ENCODE measurements at regions of chr2 and their contacts with region 1.

Region 1: DNA sequence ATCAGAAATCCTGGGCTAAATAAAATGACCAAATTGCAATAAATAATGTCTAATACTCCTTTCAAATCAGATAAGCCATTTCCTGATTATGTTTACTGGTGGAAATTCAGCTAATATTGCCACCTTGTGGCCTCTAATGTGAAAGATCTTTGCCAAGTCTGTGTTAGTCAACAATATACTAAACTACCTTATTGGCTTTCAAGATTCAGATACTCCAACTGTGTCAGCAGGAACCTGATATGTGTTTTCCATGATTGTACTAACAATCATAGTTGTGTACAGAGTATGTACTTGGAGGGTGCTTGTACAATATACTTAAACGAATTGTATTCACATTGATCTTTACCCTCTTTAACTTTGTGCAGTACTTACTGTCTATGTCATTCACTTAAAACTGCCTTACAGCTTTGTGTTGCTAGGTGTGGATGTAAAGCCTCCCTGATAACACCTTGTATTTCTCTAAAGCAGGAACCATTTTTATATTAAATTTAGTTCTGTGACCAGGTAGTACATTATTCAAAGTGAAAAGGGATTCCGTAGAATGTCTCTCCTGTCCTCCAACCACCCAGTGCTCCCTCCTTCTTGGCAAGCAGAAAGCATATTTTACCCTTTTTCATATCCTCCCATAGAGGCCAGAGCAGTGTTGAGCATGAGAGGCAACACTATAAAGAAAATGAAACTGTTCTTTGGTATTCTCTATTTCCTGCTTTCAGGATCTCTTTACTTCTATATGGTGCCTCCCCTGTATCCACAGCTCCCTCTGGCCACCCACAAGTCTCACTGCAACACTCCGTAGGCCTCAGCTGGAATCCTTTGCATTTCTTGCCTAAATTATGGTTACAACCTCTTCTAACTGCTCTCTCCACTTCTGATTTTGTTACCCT is 75.2 kb upstream of the C2orf15 start:
- DNase-seq: peak; percentile 64
- ATAC-seq: peak; percentile 99
- H3K4me3 ChIP-seq: peak overlapping the region; percentile 27 to 51 (median 41); a peak in 5 of 6 replicates
- H3K27ac ChIP-seq: no peak overlapping the region
- H3K4me1 ChIP-seq: peaks cover 15% of the 10 kb centered on the region
- H3K27me3 ChIP-seq: no peaks in the 10 kb centered on the region
- CTCF ChIP-seq: peak; percentile 75
- EP300 ChIP-seq: no peak
- POLR2A ChIP-seq: no peak
- RAD21 ChIP-seq: peak; percentile 48; the same call in 1 of the 2 replicates

Region 2: GRCh38 chr2:98412751-98413458 is 653.4 kb before region 1 on chr2:
- CTCF ChIA-PET with region 1: interaction called, 8 read pairs
- POLR2A ChIA-PET with region 1: no interaction called
- in situ Hi-C with region 1: no loop called
- intact Hi-C with region 1: loop called (anchors 1 kb)
- DNase-seq: peak; percentile 77
- ATAC-seq: peak; percentile 91
- H3K4me3 ChIP-seq: no peak overlapping the region
- H3K27ac ChIP-seq: no peak overlapping the region
- H3K4me1 ChIP-seq: peaks cover 10% of the 10 kb centered on the region; the same call in 1 of the 2 replicates
- H3K27me3 ChIP-seq: no peaks in the 10 kb centered on the region; a peak in 1 of 5 replicates
- CTCF ChIP-seq: peak; percentile 83
- EP300 ChIP-seq: no peak
- POLR2A ChIP-seq: no peak
- RAD21 ChIP-seq: peak; percentile 65

Region 3: DNA sequence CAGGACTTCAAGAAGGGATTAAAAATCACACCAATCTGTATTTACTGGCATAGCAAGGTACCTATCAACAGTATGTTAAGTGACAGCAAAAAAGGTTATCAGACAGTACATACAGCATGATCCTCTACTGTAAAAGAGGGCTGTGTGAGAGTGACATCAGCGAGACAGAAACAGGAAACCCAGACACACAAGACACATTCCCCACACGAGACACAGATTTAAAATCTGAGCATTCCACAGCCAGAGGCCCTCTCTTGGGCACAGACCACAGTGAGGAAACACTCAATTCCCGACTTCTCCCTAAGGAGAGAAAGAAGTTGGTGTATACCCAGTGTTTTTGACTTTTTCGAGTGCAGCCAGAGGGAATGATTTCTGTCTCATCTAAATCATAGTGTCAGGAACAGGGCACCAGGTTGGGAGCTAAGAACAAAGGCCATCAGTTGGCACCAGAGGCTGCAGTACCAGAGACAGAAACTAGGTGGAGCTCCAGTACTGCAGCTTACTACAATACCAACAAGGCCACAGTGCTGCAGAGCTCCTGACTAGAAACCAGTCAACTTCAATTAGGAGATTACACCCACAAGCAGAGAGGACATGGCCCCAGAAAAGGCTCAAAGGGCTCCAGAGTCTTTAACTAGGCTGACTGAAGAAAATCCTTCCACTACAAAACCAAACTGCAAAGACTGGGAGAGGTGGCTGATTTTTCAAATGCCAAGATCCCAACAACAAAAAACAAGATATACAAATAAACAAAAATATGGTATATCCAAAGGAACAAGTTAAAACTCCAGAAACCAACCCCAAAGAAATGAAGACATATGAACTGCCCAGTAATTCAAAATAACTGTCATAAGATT is 417.0 kb before region 1 on chr2:
- CTCF ChIA-PET with region 1: interaction called, 32 read pairs
- POLR2A ChIA-PET with region 1: no interaction called
- in situ Hi-C with region 1: loop called (anchors 5 kb)
- intact Hi-C with region 1: loop called (anchors 1 kb)
- DNase-seq: peak; percentile 83
- ATAC-seq: peak; percentile 99
- H3K4me3 ChIP-seq: no peak overlapping the region
- H3K27ac ChIP-seq: no peak overlapping the region
- H3K4me1 ChIP-seq: peaks cover 10% of the 10 kb centered on the region; the same call in 1 of the 2 replicates
- H3K27me3 ChIP-seq: no peaks in the 10 kb centered on the region
- CTCF ChIP-seq: peak; percentile 96
- EP300 ChIP-seq: no peak
- POLR2A ChIP-seq: no peak
- RAD21 ChIP-seq: peak; percentile 98

Region 4: DNA sequence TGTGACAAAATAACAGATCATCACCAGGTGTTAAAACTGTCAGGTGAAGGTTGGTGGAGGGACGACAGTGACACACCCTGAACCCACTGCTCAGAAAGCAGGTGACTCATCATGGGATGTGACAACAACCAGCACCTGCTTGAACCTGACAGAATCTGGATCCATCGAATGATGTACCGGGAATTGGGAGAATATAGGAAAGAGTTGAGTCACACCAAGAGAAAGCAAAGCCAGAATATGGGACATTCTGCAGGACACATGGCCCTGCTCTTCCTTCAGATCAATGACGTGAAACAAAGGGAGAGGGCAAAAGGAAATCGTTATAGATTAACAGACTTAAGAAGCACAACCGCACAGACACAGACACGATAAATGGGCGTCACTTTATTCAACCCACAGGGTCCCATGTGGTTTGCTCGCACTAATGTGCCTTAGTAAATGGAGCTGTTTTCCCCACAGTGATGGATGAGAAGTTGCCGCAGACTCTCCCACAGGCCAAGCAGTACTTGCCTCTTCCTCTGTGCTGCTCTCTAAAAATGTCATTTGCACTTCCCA is 230.4 kb before region 1 on chr2:
- CTCF ChIA-PET with region 1: no interaction called
- POLR2A ChIA-PET with region 1: no interaction called
- in situ Hi-C with region 1: no loop called
- intact Hi-C with region 1: loop called (anchors 1 kb)
- DNase-seq: no peak
- ATAC-seq: peak; percentile 43
- H3K4me3 ChIP-seq: no peak overlapping the region
- H3K27ac ChIP-seq: no peak overlapping the region
- H3K4me1 ChIP-seq: peaks cover 45% of the 10 kb centered on the region
- H3K27me3 ChIP-seq: no peaks in the 10 kb centered on the region
- CTCF ChIP-seq: no peak
- EP300 ChIP-seq: no peak
- POLR2A ChIP-seq: no peak
- RAD21 ChIP-seq: no peak

Region 5: GRCh38 chr2:98883780-98884211 is 182.5 kb before region 1 on chr2:
- CTCF ChIA-PET with region 1: interaction called, 5 read pairs
- POLR2A ChIA-PET with region 1: no interaction called
- in situ Hi-C with region 1: loop called (anchors 5 kb)
- intact Hi-C with region 1: loop called (anchors 1 kb)
- DNase-seq: no peak
- ATAC-seq: peak; percentile 48
- H3K4me3 ChIP-seq: no peak overlapping the region
- H3K27ac ChIP-seq: no peak overlapping the region
- H3K4me1 ChIP-seq: no peaks in the 10 kb centered on the region
- H3K27me3 ChIP-seq: peaks cover 2 to 40% of the 10 kb centered on the region in 2 experiments; a peak in 3 of 5 replicates
- CTCF ChIP-seq: 0 out of 2 replicates have a peak, but pooled peaks have one; percentile 12
- EP300 ChIP-seq: no peak
- POLR2A ChIP-seq: no peak
- RAD21 ChIP-seq: no peak

Region 6: DNA sequence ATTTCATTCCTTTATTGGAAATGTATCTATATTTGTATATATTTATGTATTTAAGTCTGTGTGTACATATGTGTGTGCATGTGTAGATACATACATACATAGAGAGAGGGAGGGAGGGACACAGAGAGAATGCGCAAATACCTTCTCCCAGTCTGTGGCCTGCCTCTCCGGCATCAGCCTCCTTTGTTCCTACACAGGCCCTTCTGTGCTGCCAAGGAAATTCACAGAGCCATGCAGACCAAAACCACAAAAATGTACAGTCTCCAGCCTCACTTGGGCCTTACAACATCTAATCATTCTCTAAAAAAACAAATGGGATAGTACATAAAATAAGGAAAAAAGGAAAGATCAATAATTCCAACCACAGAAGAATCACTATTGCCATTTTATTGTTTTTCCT is 121.5 kb before region 1 on chr2:
- CTCF ChIA-PET with region 1: no interaction called
- POLR2A ChIA-PET with region 1: no interaction called
- in situ Hi-C with region 1: no loop called
- intact Hi-C with region 1: loop called (anchors 10 kb)
- DNase-seq: no peak
- ATAC-seq: no peak
- H3K4me3 ChIP-seq: no peak overlapping the region
- H3K27ac ChIP-seq: no peak overlapping the region
- H3K4me1 ChIP-seq: peaks cover 11% of the 10 kb centered on the region
- H3K27me3 ChIP-seq: peaks cover 4 to 13% of the 10 kb centered on the region in 2 experiments; a peak in 3 of 5 replicates
- CTCF ChIP-seq: no peak
- EP300 ChIP-seq: no peak
- POLR2A ChIP-seq: no peak
- RAD21 ChIP-seq: no peak

Region 7: DNA sequence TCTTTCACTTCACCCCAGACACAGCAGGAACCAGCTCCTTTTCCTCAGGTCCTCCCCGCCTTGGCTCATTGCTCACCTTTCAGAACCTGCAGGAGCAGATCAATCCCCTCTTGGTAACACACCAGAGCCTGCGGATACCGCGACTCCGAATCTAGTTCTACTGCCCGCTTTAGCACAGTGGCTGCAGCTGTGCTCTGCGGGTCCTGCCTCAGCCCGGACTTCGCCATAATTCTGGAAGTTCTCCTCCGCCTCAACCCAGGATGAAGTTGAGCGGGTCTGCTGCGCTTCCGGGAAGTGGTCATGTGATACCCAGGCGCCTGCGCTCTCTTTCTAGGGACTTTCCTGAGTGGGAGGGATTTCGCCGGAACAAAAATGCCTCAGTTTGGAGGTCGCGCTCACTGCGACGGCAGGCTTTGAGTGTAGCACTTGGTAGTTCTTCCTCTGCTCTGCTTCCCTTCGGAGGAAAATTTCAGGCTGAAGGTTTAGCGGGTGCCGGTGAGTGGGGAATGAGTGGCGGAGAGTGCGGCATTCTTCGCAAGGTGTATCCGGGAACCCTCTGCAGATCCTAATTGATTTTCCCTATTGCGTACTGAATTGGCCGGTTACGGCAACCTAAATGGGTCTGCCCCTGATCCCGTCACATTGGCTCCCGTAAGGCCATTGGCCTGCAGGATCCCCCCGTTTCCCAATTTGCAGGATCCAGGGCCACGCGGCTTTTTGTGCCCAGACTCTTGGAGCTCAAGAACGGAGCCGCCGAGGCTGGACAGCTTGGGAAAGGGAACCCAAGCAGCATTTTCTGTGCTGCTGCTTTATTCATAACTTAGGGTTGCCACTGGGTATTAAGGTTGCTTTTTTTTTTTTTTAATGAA is 114.7 kb after region 1 on chr2 and contains the starts of genes MITD1 and MRPL30:
- CTCF ChIA-PET with region 1: no interaction called
- POLR2A ChIA-PET with region 1: no interaction called
- in situ Hi-C with region 1: no loop called
- intact Hi-C with region 1: loop called (anchors 1 kb)
- DNase-seq: peak; percentile 97
- ATAC-seq: peak; percentile 91
- H3K4me3 ChIP-seq: peak within 1 kb of the TSS; percentile 68 to 84 (median 84)
- H3K27ac ChIP-seq: peak within 1 kb of the TSS; percentile 83
- H3K4me1 ChIP-seq: peaks cover 46% of the 10 kb centered on the region
- H3K27me3 ChIP-seq: no peaks in the 10 kb centered on the region; a peak in 1 of 5 replicates
- CTCF ChIP-seq: peak; percentile 33; the same call in 1 of the 2 replicates
- EP300 ChIP-seq: peak; percentile 47 to 72
- POLR2A ChIP-seq: peak; percentile 95 to 99
- RAD21 ChIP-seq: no peak; the same call in none of the 2 replicates
- total RNA-seq, gene MITD1: 43.7 and 48.7 TPM in 2 replicates
- total RNA-seq, gene MRPL30: 75.3 and 118 TPM in 2 replicates

Measured in HepG2 (cell line).